HepG2 (cell line): ENCODE measurements at regions of chr10 and their contacts with region 1.

Region 1: DNA sequence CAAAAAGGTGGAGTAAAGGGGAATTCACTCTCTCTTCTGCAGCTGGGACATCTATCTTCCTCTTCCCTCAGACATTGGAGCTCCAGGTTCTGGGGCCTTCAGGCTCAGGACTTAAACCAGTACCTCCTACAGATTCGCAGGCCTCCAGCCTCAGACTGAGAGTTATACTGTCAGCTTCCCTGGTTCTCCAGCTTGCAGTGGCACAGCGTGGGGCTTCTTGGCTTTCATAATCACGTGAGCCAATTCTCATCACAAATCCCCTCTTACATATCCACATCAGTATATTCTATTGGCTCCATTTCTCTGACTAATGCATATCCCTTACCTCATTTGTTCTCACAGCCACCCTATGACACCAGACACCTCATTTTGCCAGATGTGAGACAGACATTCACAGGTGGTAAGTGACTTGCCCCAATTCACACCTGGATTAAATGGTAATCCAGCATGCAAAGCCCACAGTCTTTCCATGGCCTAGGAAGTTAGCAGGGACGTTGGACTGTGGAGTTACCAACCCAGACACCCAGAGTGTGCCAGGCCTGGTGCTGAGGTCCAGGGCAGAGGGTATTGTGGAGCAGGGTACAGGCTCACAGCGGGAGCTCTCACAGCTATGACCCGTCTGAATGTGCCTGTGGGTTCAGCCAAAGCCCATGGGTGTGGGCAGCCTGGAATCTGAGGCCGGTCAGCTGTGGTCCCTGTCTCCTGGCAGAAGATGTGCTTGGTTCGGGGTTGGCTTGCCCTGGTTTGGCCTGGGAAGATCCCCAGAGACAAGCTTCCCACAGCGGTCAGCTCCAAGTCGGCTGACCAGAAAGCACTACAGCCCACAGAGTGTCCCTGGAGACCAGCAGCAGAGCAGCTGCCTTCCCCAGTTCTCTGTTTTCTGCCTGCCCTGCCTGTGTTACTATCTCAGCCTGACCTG is 18.4 kb upstream of the ZCCHC24 start:
- DNase-seq: no peak
- ATAC-seq: no peak
- H3K4me3 ChIP-seq: no peak overlapping the region
- H3K27ac ChIP-seq: no peak overlapping the region
- H3K4me1 ChIP-seq: peaks cover 8% of the 10 kb centered on the region
- H3K27me3 ChIP-seq: peaks cover 0 to 11% of the 10 kb centered on the region in 2 experiments; a peak in 2 of 5 replicates
- CTCF ChIP-seq: no peak
- EP300 ChIP-seq: no peak
- POLR2A ChIP-seq: no peak
- RAD21 ChIP-seq: no peak

Region 2: GRCh38 chr10:78266741-78267469 is 1196.9 kb before region 1 on chr10:
- CTCF ChIA-PET with region 1: no interaction called
- POLR2A ChIA-PET with region 1: no interaction called
- in situ Hi-C with region 1: no loop called
- intact Hi-C with region 1: no loop called
- DNase-seq: no peak
- ATAC-seq: peak; percentile 36; the same call in 2 of the 3 replicates
- H3K4me3 ChIP-seq: no peak overlapping the region
- H3K27ac ChIP-seq: no peak overlapping the region
- H3K4me1 ChIP-seq: peaks cover 6% of the 10 kb centered on the region; the same call in 1 of the 2 replicates
- H3K27me3 ChIP-seq: no peaks in the 10 kb centered on the region; a peak in 1 of 5 replicates
- CTCF ChIP-seq: no peak
- EP300 ChIP-seq: no peak
- POLR2A ChIP-seq: no peak
- RAD21 ChIP-seq: no peak

Region 3: DNA sequence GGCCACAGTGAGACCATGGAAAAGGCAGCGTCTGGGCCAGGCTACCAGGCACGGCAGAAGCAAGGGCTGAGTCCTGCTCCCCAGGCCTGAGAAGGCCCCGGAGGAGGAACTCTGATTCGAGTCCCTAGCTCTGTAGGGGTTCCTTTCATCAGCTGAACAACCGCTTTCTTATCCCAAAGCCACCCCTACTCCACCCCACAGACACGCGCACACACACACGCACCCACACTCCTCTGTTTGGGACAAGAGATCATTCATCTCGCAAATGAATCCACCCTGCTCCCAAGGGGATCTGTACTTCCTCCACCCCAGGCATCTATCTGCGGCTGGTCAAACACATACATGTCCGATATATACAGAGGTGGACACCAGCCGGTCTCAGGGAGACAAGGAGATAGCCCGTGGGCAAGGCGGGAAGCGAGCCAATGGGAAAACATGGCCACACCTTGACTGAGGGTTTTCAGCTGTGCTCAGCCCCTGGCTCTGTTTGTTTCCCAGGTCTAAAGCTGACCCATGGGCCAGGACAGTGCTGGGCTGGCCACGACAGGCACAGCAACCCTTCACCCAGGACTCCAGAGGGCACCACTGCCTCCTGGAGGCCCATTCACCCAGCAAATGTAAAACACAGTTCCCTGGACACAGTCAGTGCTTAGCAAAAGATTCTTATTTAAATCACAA is 25.7 kb before region 1 on chr10:
- CTCF ChIA-PET with region 1: no interaction called
- POLR2A ChIA-PET with region 1: no interaction called
- in situ Hi-C with region 1: no loop called
- intact Hi-C with region 1: loop called (anchors 5 kb)
- DNase-seq: no peak
- ATAC-seq: peak; percentile 77
- H3K4me3 ChIP-seq: no peak overlapping the region
- H3K27ac ChIP-seq: no peak overlapping the region
- H3K4me1 ChIP-seq: peaks cover 34% of the 10 kb centered on the region
- H3K27me3 ChIP-seq: no peaks in the 10 kb centered on the region
- CTCF ChIP-seq: peak; percentile 62
- EP300 ChIP-seq: no peak
- POLR2A ChIP-seq: no peak
- RAD21 ChIP-seq: 0 out of 2 replicates have a peak, but pooled peaks have one; percentile 29